ENCODE measurements at regions of chr1 and their contacts with region 1.

Region 1: DNA sequence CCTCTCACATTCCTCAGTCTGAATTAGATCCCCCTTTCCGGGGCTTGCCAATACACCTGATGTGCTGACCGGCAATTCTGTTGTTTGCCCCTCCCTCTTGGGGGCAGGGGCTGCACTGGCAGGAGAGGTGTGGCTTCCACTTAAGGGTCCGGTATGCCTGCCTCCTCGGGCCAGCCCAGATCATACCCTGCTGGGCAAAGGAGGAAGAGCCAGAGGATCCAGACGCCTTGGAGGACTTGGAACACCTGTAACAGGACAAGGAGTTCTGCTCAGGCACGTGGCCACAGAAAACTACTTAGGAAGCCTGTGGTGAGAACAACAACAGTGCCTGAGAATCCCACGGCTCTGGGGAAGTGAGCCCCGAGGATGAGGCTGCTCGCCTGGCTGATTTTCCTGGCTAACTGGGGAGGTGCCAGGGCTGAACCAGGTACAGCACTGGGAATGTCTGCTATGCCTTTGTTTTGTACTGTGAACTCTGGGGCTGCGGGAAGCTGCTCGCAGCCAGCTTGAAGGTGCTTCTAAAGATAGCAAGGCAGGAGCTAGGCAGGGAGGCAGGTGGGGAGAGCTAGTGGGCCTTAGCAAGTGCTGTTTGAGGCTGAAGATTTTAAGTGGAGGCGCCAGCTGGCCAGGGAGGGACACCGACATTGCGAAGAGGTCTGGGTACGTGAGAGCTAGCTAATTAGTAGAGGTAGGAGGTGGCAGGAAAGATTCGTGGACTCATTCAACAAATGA is at the start of gene SMPDL3B:
- DNase-seq: no peak
- H3K4me3 ChIP-seq: peak within 1 kb of the TSS; percentile 30
- H3K27ac ChIP-seq: no peak within 1 kb of the TSS
- H3K4me1 ChIP-seq: peaks cover 4% of the 10 kb centered on the region
- H3K27me3 ChIP-seq: no peaks in the 10 kb centered on the region
- CTCF ChIP-seq: no peak
- total RNA-seq, gene SMPDL3B: 0.61 and 0.62 TPM in 2 replicates

Region 2: DNA sequence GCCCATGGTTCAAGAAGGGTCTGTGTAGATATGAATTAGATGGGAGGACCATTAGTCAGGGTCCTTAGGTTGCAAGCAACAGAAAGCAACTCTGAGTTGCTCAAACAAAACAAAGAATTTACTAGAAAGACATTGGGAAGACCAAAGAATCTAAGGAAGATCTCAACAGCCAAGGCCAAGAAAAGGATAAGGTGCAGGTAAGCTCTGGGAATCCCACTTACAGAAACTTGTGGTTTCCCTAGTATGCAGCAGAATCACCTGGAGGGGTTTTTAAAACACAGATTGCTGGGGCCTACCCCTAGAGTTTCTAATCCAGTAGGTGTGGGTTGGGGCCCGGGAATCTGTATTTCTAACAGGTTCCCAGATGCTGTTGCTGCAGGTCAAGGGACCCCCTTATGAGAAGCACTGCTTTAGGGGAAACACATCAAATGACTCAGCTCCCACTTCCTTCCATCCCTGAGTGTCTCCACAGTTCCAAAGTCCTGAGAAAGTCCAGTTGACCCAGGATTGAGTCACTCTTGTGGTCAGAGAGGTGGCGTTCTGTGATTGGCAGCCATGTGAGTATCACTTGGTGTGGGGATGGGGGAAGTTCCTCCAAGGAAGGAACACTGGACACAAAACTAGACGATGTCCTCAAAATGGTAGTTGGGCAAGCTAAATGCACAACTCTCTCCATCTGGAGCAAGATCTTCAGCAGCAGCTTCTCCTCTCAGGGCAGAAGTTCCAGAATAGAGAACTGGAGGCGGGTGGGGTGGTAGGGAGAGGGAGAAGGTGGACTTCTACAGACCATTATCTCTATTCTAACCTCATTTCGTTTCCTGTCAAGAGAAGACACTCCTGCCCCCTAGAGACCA is 177.6 kb after region 1 on chr1:
- CTCF ChIA-PET with region 1: interaction called, 13 read pairs
- POLR2A ChIA-PET with region 1: no interaction called
- intact Hi-C with region 1: no loop called
- DNase-seq: peak; percentile 35
- H3K4me3 ChIP-seq: no peak overlapping the region
- H3K27ac ChIP-seq: no peak overlapping the region
- H3K4me1 ChIP-seq: no peaks in the 10 kb centered on the region
- H3K27me3 ChIP-seq: no peaks in the 10 kb centered on the region
- CTCF ChIP-seq: no peak; the same call in 1 of the 2 replicates

Region 3: DNA sequence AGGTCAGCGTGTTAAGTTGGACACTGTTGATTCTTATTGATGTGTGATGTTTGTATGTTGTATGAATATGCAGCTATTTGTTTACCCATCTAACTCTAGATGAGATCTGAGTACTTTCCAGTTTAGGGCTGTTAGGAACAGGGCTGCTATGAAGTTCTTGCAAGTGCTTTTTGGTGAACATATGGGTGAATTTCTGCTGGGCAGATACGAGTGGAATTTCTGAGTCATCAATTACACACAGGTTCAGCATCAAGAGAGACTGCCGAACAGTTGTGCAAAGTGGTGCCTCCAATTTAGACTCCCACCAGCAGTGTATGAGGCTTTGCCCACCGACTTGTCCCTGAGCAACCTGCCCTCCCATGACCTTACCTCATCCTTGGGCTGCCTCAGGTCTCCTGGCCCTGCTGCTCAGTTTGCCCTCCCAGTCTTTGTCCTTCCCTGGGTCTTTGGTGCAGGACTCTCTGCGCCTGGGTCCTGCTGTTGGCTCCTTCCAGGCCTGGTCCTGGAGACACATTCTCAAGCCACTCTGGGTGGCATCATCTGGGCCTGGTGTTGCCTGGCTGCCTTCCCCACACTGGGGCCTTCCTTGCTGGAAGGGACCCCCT is 1644.9 kb after region 1 on chr1:
- CTCF ChIA-PET with region 1: no interaction called
- POLR2A ChIA-PET with region 1: no interaction called
- intact Hi-C with region 1: no loop called
- DNase-seq: no peak
- H3K4me3 ChIP-seq: no peak overlapping the region
- H3K27ac ChIP-seq: no peak overlapping the region
- H3K4me1 ChIP-seq: no peaks in the 10 kb centered on the region
- H3K27me3 ChIP-seq: peaks cover 21% of the 10 kb centered on the region
- CTCF ChIP-seq: no peak

Measured in A673 (cell line).